ENCODE measurements at regions of chr14 and their contacts with region 1.

Region 1: GRCh38 chr14:58717813-58718212 is 80.1 kb downstream of the DACT1 start:
- DNase-seq: no peak
- ATAC-seq: no peak; the same call in 2 of the 3 replicates
- H3K4me3 ChIP-seq: no peak overlapping the region
- H3K27ac ChIP-seq: no peak overlapping the region
- H3K4me1 ChIP-seq: no peaks in the 10 kb centered on the region
- H3K27me3 ChIP-seq: no peaks in the 10 kb centered on the region; a peak in 1 of 4 replicates
- CTCF ChIP-seq: no peak
- EP300 ChIP-seq: no peak
- POLR2A ChIP-seq: no peak
- RAD21 ChIP-seq: no peak

Region 2: DNA sequence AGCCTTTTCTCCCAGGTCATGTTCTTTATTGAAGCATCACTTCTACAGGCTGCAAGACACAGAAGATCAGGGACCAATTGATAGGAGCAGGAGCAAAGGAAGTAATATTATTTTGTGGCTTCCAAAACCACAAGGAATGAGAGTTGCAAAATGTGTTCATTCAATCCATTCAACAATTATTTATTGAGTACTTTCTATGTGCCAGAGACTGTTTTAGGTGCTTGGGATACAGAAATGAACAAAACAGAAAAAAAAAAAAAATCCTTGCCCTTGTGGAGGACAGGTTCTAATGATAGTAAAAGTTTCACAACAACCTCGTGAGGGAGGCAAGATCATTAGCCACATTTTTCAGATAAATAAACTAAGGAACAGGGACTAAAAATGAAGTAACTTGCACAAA is 100.2 kb before region 1 on chr14:
- CTCF ChIA-PET with region 1: no interaction called
- POLR2A ChIA-PET with region 1: no interaction called
- RAD21 ChIA-PET with region 1: no interaction called
- SMC1A ChIA-PET with region 1: no interaction called
- in situ Hi-C with region 1: no loop called
- intact Hi-C with region 1: no loop called
- DNase-seq: no peak
- ATAC-seq: no peak
- H3K4me3 ChIP-seq: no peak overlapping the region
- H3K27ac ChIP-seq: no peak overlapping the region
- H3K4me1 ChIP-seq: no peaks in the 10 kb centered on the region
- H3K27me3 ChIP-seq: no peaks in the 10 kb centered on the region
- CTCF ChIP-seq: no peak
- EP300 ChIP-seq: no peak
- POLR2A ChIP-seq: no peak
- RAD21 ChIP-seq: no peak

Region 3: GRCh38 chr14:58731465-58732330 is 13.9 kb after region 1 on chr14:
- CTCF ChIA-PET with region 1: interaction called, 3 read pairs
- POLR2A ChIA-PET with region 1: interaction called, 5 read pairs
- RAD21 ChIA-PET with region 1: interaction called, 3 read pairs
- SMC1A ChIA-PET with region 1: interaction called, 10 read pairs
- in situ Hi-C with region 1: no loop called
- intact Hi-C with region 1: no loop called
- DNase-seq: no peak
- ATAC-seq: no peak
- H3K4me3 ChIP-seq: no peak overlapping the region
- H3K27ac ChIP-seq: no peak overlapping the region
- H3K4me1 ChIP-seq: no peaks in the 10 kb centered on the region
- H3K27me3 ChIP-seq: no peaks in the 10 kb centered on the region
- CTCF ChIP-seq: no peak
- EP300 ChIP-seq: no peak
- POLR2A ChIP-seq: no peak
- RAD21 ChIP-seq: no peak

Region 4: DNA sequence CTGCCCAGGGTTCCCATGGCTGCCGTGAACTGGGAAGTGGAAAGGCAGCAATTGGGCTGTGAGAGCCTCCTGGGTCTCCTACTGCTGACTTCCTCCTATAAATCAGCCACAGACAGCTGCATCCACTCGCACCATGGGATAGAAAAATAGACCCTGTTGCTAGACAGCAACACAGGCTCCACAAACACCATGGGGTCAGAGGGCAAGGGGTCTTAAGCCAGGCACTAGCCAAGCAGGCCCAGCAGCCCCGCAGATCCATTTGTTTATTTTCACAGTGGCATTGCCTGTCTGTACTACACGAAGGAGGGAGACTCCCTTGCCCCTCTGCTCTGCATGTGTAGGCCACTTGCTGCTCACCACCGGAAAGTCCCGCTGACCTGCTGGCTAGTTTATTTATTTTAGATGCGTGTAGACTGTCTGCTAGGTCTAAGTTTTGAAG is 59.7 kb after region 1 on chr14:
- CTCF ChIA-PET with region 1: no interaction called
- POLR2A ChIA-PET with region 1: no interaction called
- RAD21 ChIA-PET with region 1: no interaction called
- SMC1A ChIA-PET with region 1: no interaction called
- in situ Hi-C with region 1: no loop called
- intact Hi-C with region 1: no loop called
- DNase-seq: no peak
- ATAC-seq: peak; percentile 76
- H3K4me3 ChIP-seq: no peak overlapping the region
- H3K27ac ChIP-seq: no peak overlapping the region
- H3K4me1 ChIP-seq: no peaks in the 10 kb centered on the region
- H3K27me3 ChIP-seq: no peaks in the 10 kb centered on the region
- CTCF ChIP-seq: no peak
- EP300 ChIP-seq: no peak
- POLR2A ChIP-seq: no peak
- RAD21 ChIP-seq: no peak

Region 5: GRCh38 chr14:58836293-58836974 is 118.6 kb after region 1 on chr14:
- CTCF ChIA-PET with region 1: no interaction called
- POLR2A ChIA-PET with region 1: no interaction called
- RAD21 ChIA-PET with region 1: no interaction called
- SMC1A ChIA-PET with region 1: no interaction called
- in situ Hi-C with region 1: no loop called
- intact Hi-C with region 1: no loop called
- DNase-seq: no peak
- ATAC-seq: no peak
- H3K4me3 ChIP-seq: no peak overlapping the region
- H3K27ac ChIP-seq: no peak overlapping the region
- H3K4me1 ChIP-seq: no peaks in the 10 kb centered on the region
- H3K27me3 ChIP-seq: no peaks in the 10 kb centered on the region
- CTCF ChIP-seq: no peak
- EP300 ChIP-seq: no peak
- POLR2A ChIP-seq: no peak
- RAD21 ChIP-seq: no peak

Region 6: GRCh38 chr14:58864751-58865513 is 147.1 kb after region 1 on chr14:
- CTCF ChIA-PET with region 1: no interaction called
- POLR2A ChIA-PET with region 1: no interaction called
- RAD21 ChIA-PET with region 1: no interaction called
- SMC1A ChIA-PET with region 1: no interaction called
- in situ Hi-C with region 1: no loop called
- intact Hi-C with region 1: no loop called
- DNase-seq: no peak
- ATAC-seq: no peak
- H3K4me3 ChIP-seq: no peak overlapping the region
- H3K27ac ChIP-seq: no peak overlapping the region
- H3K4me1 ChIP-seq: no peaks in the 10 kb centered on the region
- H3K27me3 ChIP-seq: no peaks in the 10 kb centered on the region
- CTCF ChIP-seq: no peak
- EP300 ChIP-seq: no peak
- POLR2A ChIP-seq: no peak
- RAD21 ChIP-seq: no peak

Measured in GM12878 (cell line).